ENCODE measurements at regions of chr16 and their contacts with region 1.

Region 1: DNA sequence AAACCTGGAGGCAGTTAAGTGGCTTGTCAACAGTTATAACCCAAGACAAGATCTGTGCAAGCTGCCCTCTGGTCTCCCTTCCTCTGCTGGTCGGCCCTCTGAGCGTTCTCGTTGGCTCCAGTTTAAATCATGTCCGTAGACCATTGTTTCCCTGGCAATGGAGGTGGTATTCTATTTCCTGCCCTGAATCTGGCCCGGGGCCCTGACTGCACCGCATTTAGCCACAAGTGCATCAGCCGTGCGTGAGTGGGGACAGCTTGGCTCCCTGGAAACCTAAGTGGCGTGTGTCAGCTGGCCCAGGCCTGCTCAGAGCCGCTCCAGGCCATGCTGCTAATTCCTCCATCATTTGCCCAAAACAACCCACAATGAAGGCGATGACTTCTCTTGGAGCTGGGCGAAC is 15.0 kb upstream of the MYLK3 start:
- DNase-seq: no peak
- H3K4me3 ChIP-seq: no peak overlapping the region
- H3K4me3 Mint-ChIP-seq: no peak overlapping the region
- H3K27ac Mint-ChIP-seq: no peak overlapping the region
- H3K4me1 ChIP-seq: no peaks in the 10 kb centered on the region
- H3K4me1 Mint-ChIP-seq: peaks cover 4% of the 10 kb centered on the region
- H3K27me3 ChIP-seq: no peaks in the 10 kb centered on the region
- H3K27me3 Mint-ChIP-seq: no peaks in the 10 kb centered on the region
- CTCF ChIP-seq: no peak

Region 2: DNA sequence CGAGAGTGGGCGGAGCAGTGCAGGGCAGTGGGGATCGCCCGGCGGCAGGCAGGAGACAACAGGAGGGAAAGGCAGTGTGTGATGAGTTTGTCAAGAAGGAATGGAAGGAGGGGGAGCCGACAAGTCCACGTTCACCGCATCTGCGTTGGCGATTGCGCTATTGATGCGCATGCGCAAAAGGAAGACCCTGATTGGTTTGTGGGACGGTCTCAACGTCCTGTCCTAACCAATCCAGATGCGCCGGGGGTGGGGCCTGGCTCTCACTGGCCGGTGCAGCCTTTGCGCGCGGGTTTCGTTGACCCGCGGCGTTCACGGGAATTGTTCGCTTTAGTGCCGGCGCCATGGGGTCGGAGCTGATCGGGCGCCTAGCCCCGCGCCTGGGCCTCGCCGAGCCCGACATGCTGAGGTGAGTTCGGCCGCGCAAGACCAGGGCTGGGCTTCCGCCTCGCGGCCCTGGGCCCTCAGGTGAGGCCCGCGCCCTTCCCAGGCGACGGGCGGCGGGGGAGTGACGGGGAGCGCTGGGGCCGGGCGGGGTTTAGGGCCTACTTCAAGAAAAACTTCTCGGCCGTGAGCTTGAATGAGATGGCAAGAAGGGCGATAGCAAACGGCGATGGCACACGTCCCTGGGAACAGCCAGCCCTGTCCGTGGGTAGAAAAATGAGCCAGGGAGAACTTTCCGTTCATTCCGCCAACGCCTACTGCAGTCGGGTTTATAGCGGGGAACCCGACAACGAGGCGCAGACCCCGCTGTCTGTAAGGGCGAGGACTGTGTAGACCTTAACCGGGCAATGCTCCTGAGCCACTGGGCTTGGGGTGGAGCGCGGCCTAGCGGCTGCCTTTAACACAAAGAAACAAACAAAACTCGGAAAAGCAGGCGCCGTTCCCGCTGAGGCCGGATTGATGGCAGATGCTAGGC is 73.5 kb before region 1 on chr16 and contains the start of gene ORC6:
- CTCF ChIA-PET with region 1: no interaction called
- POLR2A ChIA-PET with region 1: no interaction called
- intact Hi-C with region 1: no loop called
- DNase-seq: peak; percentile 97
- H3K4me3 ChIP-seq: peak within 1 kb of the TSS; percentile 71
- H3K4me3 Mint-ChIP-seq: no peak within 1 kb of the TSS
- H3K27ac Mint-ChIP-seq: no peak within 1 kb of the TSS
- H3K4me1 ChIP-seq: peaks cover 40% of the 10 kb centered on the region
- H3K4me1 Mint-ChIP-seq: peaks cover 26% of the 10 kb centered on the region
- H3K27me3 ChIP-seq: no peaks in the 10 kb centered on the region
- H3K27me3 Mint-ChIP-seq: no peaks in the 10 kb centered on the region
- CTCF ChIP-seq: peak; percentile 33 to 55
- total RNA-seq, gene ORC6: 55.2 and 56.3 TPM in 2 replicates

Region 3: GRCh38 chr16:46789499-46790414 is 26.6 kb after region 1 on chr16:
- CTCF ChIA-PET with region 1: no interaction called
- POLR2A ChIA-PET with region 1: no interaction called
- intact Hi-C with region 1: loop called (anchors 2 kb)
- DNase-seq: peak; percentile 77 to 79
- H3K4me3 ChIP-seq: peak overlapping the region; percentile 55
- H3K4me3 Mint-ChIP-seq: peak overlapping the region; percentile 78
- H3K27ac Mint-ChIP-seq: peak overlapping the region; percentile 48
- H3K4me1 ChIP-seq: peaks cover 18% of the 10 kb centered on the region
- H3K4me1 Mint-ChIP-seq: peaks cover 12% of the 10 kb centered on the region
- H3K27me3 ChIP-seq: no peaks in the 10 kb centered on the region
- H3K27me3 Mint-ChIP-seq: no peaks in the 10 kb centered on the region
- CTCF ChIP-seq: no peak

Region 4: DNA sequence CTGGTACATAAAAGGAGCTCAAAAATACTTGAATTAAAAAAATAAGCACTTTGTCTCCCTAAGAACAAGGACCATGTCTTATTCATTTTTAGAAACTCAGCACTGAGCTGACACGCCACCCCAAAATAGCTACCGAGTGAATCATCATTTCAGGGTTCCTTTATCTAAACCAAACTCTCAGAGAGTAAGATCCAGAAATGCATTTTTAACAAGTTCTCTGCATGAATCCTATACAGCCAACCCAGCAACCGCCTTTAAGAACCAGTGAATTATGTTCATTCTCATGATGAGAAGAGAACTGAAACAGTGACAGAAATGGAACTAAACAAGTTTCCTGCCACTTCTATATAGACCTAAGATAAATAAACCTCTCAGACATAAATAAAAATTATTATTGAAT is 59.1 kb after region 1 on chr16:
- CTCF ChIA-PET with region 1: no interaction called
- POLR2A ChIA-PET with region 1: no interaction called
- intact Hi-C with region 1: no loop called
- DNase-seq: no peak
- H3K4me3 ChIP-seq: no peak overlapping the region
- H3K4me3 Mint-ChIP-seq: no peak overlapping the region
- H3K27ac Mint-ChIP-seq: no peak overlapping the region
- H3K4me1 ChIP-seq: no peaks in the 10 kb centered on the region
- H3K4me1 Mint-ChIP-seq: no peaks in the 10 kb centered on the region
- H3K27me3 ChIP-seq: no peaks in the 10 kb centered on the region
- H3K27me3 Mint-ChIP-seq: no peaks in the 10 kb centered on the region
- CTCF ChIP-seq: no peak

Region 5: DNA sequence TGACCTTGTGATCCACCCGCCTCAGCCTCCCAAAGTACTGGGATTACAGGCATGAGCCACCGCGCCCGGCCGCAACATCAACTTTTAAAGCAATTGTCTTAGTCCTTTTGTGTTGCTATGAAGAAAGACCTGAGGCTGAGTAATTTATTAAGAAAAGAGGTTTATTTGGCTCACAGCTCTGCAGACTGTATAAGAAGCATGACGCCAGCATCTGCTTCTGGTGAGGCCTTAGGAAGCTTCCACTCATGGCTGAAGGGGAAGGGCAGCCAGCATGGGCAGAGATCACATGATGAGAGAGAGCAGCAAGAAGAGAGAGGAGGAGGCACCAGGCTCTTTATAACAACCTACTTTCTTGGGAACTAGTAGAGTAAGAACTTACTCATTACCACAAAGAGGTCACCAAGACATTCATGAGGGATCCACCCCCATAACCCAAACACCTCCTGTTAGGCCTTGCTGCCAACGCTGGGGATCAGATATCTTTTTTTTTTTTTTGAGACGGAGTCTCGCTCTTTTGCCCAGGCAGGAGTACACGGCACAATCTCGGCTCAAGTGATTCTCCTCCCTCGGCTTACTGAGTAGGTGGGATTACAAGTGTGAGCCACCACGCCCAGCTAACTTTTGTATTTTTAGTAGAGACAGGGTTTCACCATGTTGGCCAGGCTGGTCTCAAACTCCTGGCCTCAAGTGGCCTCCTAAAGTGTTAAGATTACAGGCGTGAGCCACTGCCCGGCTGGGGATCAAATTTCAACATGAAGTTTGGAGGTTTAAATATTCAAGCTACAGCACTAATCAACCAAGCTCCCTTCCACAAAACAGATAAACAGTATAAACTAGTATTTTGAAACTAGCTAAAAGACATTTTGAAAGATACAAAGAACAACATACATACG is 99.7 kb after region 1 on chr16:
- CTCF ChIA-PET with region 1: no interaction called
- POLR2A ChIA-PET with region 1: no interaction called
- intact Hi-C with region 1: no loop called
- DNase-seq: no peak
- H3K4me3 ChIP-seq: no peak overlapping the region
- H3K4me3 Mint-ChIP-seq: no peak overlapping the region
- H3K27ac Mint-ChIP-seq: no peak overlapping the region
- H3K4me1 ChIP-seq: peaks cover 15% of the 10 kb centered on the region
- H3K4me1 Mint-ChIP-seq: peaks cover 8% of the 10 kb centered on the region
- H3K27me3 ChIP-seq: no peaks in the 10 kb centered on the region
- H3K27me3 Mint-ChIP-seq: no peaks in the 10 kb centered on the region
- CTCF ChIP-seq: no peak

Measured in Caco-2 (cell line).